MCF 10A (cell line): ENCODE measurements at regions of chr3 and their contacts with region 1.

Region 1: DNA sequence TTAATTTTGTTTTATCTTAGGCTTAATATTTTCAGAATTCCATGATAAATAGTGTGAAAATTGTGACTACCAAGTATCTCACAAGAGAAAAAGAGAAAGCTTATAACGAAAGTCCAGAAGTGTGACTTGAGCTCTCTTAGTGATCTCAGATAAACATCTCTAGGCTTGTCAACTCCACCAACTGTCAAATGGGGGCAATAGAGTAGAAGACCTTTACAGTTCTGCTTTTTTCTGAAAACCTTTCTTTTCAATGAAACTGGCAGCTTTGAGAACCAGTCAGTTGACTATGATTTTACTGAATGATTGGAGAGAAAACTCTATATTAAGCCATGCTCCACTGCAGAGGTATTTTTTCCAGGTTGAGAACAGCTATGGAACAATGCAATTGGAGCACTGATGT is 119.2 kb upstream of the TP63 start:
- DNase-seq: no peak
- H3K4me3 Mint-ChIP-seq: no peak overlapping the region
- H3K27ac Mint-ChIP-seq: peak overlapping the region; percentile 99
- H3K4me1 Mint-ChIP-seq: peaks cover 45% of the 10 kb centered on the region
- H3K27me3 Mint-ChIP-seq: no peaks in the 10 kb centered on the region
- CTCF ChIP-seq: no peak

Region 2: GRCh38 chr3:189304446-189305351 is 207.3 kb before region 1 on chr3:
- CTCF ChIA-PET with region 1: interaction called, 5 read pairs
- POLR2A ChIA-PET with region 1: interaction called, 121 read pairs
- intact Hi-C with region 1: no loop called
- DNase-seq: peak; percentile 96
- H3K4me3 Mint-ChIP-seq: peak overlapping the region; percentile 65
- H3K27ac Mint-ChIP-seq: peak overlapping the region; percentile 99
- H3K4me1 Mint-ChIP-seq: peaks cover 59% of the 10 kb centered on the region
- H3K27me3 Mint-ChIP-seq: no peaks in the 10 kb centered on the region
- CTCF ChIP-seq: no peak

Region 3: GRCh38 chr3:189394599-189395121 is 117.4 kb before region 1 on chr3:
- CTCF ChIA-PET with region 1: interaction called, 3 read pairs
- POLR2A ChIA-PET with region 1: interaction called, 53 read pairs
- intact Hi-C with region 1: no loop called
- DNase-seq: no peak
- H3K4me3 Mint-ChIP-seq: no peak overlapping the region
- H3K27ac Mint-ChIP-seq: no peak overlapping the region
- H3K4me1 Mint-ChIP-seq: peaks cover 32% of the 10 kb centered on the region
- H3K27me3 Mint-ChIP-seq: no peaks in the 10 kb centered on the region
- CTCF ChIP-seq: no peak

Region 4: DNA sequence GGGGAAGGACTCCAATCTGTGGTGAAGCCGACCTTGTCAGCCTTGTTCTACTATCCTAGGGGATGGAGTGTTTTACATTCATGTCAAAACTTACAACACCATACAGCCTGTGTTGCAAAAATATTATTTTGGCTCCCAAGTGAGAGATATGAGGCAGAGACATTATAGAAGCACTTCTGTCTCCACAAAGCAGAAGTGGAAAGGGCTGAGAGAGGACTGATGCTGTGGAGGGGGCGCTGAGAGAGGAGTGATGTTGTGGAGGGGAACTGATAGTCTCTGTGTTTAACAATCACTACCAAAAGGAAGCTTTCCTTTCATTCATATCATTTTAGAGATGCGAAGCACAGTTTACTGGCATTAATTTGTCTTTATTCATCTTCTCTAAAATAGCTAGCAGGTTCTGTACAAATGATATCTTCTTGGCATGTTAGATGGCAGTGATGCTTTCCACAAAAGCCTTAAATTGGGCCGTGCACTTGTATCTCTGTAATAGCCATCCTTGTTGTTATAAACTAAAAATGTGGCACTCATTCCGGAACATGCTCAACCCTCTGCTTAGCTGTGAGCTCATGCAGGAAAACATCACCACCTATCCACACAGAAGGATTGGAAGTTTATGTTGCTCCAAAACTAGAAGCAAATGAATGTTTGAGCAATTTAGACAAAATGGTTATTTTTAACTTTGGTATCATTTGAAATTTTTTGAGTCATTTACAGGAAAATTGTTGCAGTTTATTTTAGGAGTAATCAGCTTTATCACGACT is 15.5 kb before region 1 on chr3:
- CTCF ChIA-PET with region 1: interaction called, 3 read pairs
- POLR2A ChIA-PET with region 1: interaction called, 45 read pairs
- intact Hi-C with region 1: no loop called
- DNase-seq: no peak
- H3K4me3 Mint-ChIP-seq: no peak overlapping the region
- H3K27ac Mint-ChIP-seq: peak overlapping the region; percentile 57
- H3K4me1 Mint-ChIP-seq: peaks cover 22% of the 10 kb centered on the region
- H3K27me3 Mint-ChIP-seq: no peaks in the 10 kb centered on the region
- CTCF ChIP-seq: no peak

Region 5: DNA sequence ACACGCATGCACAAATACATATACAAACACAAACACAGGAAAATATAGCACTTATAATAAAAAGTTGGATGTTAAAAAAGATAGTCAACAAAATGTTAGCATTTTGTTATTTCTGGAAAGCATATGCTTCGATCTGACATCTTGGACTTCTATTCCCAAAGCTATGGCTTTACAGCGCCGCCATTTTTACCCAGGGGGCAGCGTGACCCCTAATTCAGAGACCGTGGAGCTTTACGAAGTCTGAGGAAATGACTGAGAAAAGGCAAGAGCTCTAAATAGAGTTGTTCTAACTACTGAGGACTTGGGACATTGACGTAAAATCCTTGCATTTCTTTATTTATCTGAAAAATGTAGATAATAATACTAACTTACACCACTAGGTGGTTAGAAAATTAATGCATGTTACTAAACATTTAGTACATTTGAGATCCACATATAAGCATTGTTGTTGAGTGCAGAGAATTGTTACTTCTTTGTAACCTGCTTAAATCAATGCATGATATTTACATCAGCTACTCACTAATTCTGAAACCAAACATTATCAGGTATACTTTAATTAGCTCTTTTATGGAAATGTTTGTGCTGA is 274.5 kb after region 1 on chr3:
- CTCF ChIA-PET with region 1: interaction called, 3 read pairs
- POLR2A ChIA-PET with region 1: interaction called, 35 read pairs
- intact Hi-C with region 1: no loop called
- DNase-seq: no peak
- H3K4me3 Mint-ChIP-seq: no peak overlapping the region
- H3K27ac Mint-ChIP-seq: no peak overlapping the region
- H3K4me1 Mint-ChIP-seq: peaks cover 5% of the 10 kb centered on the region
- H3K27me3 Mint-ChIP-seq: no peaks in the 10 kb centered on the region
- CTCF ChIP-seq: peak; percentile 20

Region 6: GRCh38 chr3:189841473-189842210 is 329.6 kb after region 1 on chr3:
- CTCF ChIA-PET with region 1: no interaction called
- POLR2A ChIA-PET with region 1: interaction called, 34 read pairs
- intact Hi-C with region 1: no loop called
- DNase-seq: peak; percentile 94
- H3K4me3 Mint-ChIP-seq: peak overlapping the region; percentile 57
- H3K27ac Mint-ChIP-seq: peak overlapping the region; percentile 99
- H3K4me1 Mint-ChIP-seq: peaks cover 58% of the 10 kb centered on the region
- H3K27me3 Mint-ChIP-seq: no peaks in the 10 kb centered on the region
- CTCF ChIP-seq: no peak